Activated CD4-positive, alpha-beta memory T cell treated with anti-CD3 and anti-CD28 coated beads, Interleukin-2, amount 10 ng/mL, durations not matched to agents 7 days and 5 days (primary cell): ENCODE measurements at regions of chr1 and their contacts with region 1.

Region 1: DNA sequence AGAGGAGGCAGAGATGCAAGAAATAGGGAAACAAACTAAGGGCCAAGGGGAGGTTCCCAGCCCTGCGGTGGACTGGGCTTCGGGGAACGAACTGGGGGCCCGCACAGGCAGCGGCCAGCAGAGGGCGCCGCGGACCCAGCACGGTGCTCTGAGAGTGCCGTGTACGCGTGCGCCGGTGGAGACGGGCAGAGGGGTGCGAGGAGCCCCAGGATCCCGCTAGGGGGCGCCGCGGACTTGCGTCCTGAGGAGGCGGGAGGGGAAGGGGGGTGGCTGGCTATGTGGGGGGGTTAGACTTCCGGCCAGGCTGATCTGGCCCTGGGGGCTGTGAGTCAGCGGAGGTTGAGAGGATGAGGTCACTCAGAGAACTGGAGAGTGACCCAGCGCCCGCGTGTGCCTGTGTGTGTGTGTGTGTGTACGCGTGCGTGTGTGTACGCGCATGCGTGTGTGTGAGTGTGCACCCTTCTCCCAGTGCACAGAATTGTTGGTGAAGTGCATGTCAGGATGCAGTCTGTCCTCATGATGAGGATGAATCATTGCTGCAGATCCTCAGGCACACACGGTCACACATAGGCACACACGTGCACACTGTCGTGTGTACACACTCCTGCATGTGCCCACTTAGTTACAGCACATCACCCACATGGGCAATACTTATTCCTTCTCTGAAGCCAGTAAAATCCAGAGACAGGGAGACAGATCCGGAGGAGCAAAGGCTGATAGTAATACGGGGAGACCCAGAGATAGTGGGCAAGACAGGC is 17.0 kb downstream of the NES start:
- DNase-seq: peak; percentile 95
- H3K4me3 Mint-ChIP-seq: peak overlapping the region; percentile 83
- H3K27ac Mint-ChIP-seq: peak overlapping the region; percentile 86
- H3K4me1 Mint-ChIP-seq: peaks cover 72% of the 10 kb centered on the region
- H3K27me3 Mint-ChIP-seq: peaks cover 30% of the 10 kb centered on the region

Region 2: DNA sequence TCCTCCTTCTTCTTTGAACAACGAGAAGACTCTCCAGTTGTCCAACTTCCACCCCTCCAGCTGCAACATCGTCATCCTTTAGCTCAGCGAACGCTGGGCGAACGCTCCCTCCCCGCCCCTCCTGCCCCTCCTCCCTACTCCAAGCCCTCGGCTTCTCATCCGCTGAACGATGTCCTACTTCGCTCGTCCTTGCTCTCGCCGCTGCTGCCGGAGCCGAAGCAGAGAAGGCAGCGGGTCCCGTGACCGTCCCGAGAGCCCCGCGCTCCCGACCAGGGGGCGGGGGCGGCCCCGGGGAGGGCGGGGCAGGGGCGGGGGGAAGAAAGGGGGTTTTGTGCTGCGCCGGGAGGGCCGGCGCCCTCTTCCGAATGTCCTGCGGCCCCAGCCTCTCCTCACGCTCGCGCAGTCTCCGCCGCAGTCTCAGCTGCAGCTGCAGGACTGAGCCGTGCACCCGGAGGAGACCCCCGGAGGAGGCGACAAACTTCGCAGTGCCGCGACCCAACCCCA is 18.4 kb before region 1 on chr1 and contains the start of gene BCAN:
- CTCF ChIA-PET with region 1: interaction called, 41 read pairs
- POLR2A ChIA-PET with region 1: interaction called, 4 read pairs
- DNase-seq: no peak
- H3K4me3 Mint-ChIP-seq: no peak within 1 kb of the TSS
- H3K27ac Mint-ChIP-seq: peak within 1 kb of the TSS; percentile 49
- H3K4me1 Mint-ChIP-seq: peaks cover 42% of the 10 kb centered on the region
- H3K27me3 Mint-ChIP-seq: peaks cover 82% of the 10 kb centered on the region
- total RNA-seq, gene BCAN: not detected

Region 3: GRCh38 chr1:156648951-156649350 is 11.2 kb before region 1 on chr1:
- CTCF ChIA-PET with region 1: interaction called, 41 read pairs
- POLR2A ChIA-PET with region 1: interaction called, 4 read pairs
- DNase-seq: no peak
- H3K4me3 Mint-ChIP-seq: no peak overlapping the region
- H3K27ac Mint-ChIP-seq: no peak overlapping the region
- H3K4me1 Mint-ChIP-seq: peaks cover 14% of the 10 kb centered on the region
- H3K27me3 Mint-ChIP-seq: peaks cover 75% of the 10 kb centered on the region

Region 4: GRCh38 chr1:156677616-156678596 is 17.7 kb after region 1 on chr1:
- CTCF ChIA-PET with region 1: interaction called, 139 read pairs
- POLR2A ChIA-PET with region 1: interaction called, 5 read pairs
- DNase-seq: peak; percentile 35
- H3K4me3 Mint-ChIP-seq: no peak overlapping the region
- H3K27ac Mint-ChIP-seq: no peak overlapping the region
- H3K4me1 Mint-ChIP-seq: peaks cover 14% of the 10 kb centered on the region
- H3K27me3 Mint-ChIP-seq: peaks cover 76% of the 10 kb centered on the region